Sigmoid colon (tissue), 7 donors: ENCODE measurements at regions of chr19 and their contacts with region 1.

Region 1: GRCh38 chr19:52748336-52748950 is 13.6 kb upstream of the ZNF611 start:
- DNase-seq: no peak
- H3K4me3 ChIP-seq: no peak overlapping the region
- H3K27ac ChIP-seq: no peak overlapping the region
- H3K4me1 ChIP-seq: peaks cover 0 to 5% (median 1%) of the 10 kb centered on the region in 4 donors
- H3K27me3 ChIP-seq: no peaks in the 10 kb centered on the region
- CTCF ChIP-seq: peak in 3 of 4 experiments; percentile 39 to 41 (median 41)
- EP300 ChIP-seq: no peak
- POLR2A ChIP-seq: no peak

Region 2: GRCh38 chr19:52248241-52248640 is 500.2 kb before region 1 on chr19:
- intact Hi-C with region 1: loop called (anchors 5 kb)
- DNase-seq: no peak
- H3K4me3 ChIP-seq: no peak overlapping the region
- H3K27ac ChIP-seq: no peak overlapping the region
- H3K4me1 ChIP-seq: no peaks in the 10 kb centered on the region
- H3K27me3 ChIP-seq: no peaks in the 10 kb centered on the region
- CTCF ChIP-seq: peak; percentile 19 to 51 (median 24)
- EP300 ChIP-seq: no peak
- POLR2A ChIP-seq: no peak